ENCODE measurements at regions of chr15 and their contacts with region 1.

Region 1: GRCh38 chr15:78241007-78241406 is 6.6 kb upstream of the ACSBG1 start:
- DNase-seq: no peak
- ATAC-seq: peak; percentile 99
- H3K4me3 ChIP-seq: no peak overlapping the region
- H3K27ac ChIP-seq: no peak overlapping the region
- H3K4me1 ChIP-seq: no peaks in the 10 kb centered on the region
- H3K27me3 ChIP-seq: no peaks in the 10 kb centered on the region
- CTCF ChIP-seq: peak; percentile 84 to 93 (median 88)
- EP300 ChIP-seq: no peak
- POLR2A ChIP-seq: no peak
- RAD21 ChIP-seq: peak; percentile 86

Region 2: DNA sequence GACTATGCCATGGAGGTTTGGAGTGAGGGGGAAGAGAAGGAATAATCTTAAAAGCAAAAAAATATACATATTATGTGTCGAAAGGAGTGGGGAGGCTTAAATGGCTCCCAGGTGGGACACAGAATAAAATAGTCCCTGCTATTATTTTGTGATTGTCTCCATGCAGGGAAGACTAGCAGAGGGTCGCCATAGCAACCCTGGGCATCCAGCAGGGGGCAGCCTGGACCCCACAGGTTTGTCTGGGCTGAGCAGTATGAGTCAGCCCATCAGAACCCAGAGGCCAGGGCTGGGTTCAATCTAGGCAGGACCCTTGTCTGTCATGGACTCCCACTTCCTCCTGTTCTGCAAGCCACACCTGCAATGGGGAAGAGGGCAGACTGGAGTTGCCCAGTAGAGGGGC is 590.7 kb before region 1 on chr15:
- CTCF ChIA-PET with region 1: no interaction called
- POLR2A ChIA-PET with region 1: no interaction called
- RAD21 ChIA-PET with region 1: no interaction called
- SMC1A ChIA-PET with region 1: no interaction called
- in situ Hi-C with region 1: no loop called
- intact Hi-C with region 1: no loop called
- DNase-seq: no peak
- ATAC-seq: peak; percentile 53
- H3K4me3 ChIP-seq: no peak overlapping the region
- H3K27ac ChIP-seq: no peak overlapping the region
- H3K4me1 ChIP-seq: no peaks in the 10 kb centered on the region
- H3K27me3 ChIP-seq: peaks cover 0 to 2% of the 10 kb centered on the region in 2 experiments; a peak in 2 of 4 replicates
- CTCF ChIP-seq: peak in 2 of 3 experiments; percentile 19 to 27; a peak in 2 of 6 replicates
- EP300 ChIP-seq: no peak
- POLR2A ChIP-seq: no peak
- RAD21 ChIP-seq: 0 out of 2 replicates have a peak, but pooled peaks have one; percentile 3

Region 3: DNA sequence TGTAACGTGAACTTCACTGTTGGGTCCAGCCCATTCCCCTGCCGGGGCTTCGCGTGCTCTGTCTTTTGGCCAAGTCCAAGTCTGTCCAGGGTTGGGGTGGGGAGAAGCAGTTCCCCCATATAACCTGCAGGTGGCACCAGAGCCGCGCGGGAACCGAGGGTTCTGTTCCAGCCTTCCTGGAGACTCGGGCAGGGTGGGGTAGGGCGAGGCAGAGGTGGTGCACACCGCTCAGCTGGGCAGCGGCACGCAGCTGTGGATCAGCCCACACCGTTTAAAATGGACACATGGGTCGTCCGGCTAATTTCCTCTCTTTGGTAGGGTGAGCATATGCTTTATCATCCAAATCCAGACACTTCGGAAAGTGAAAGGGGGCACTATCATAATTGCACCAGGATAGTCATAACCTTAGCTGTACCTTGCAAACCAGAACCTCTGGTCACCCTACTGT is 281.6 kb before region 1 on chr15:
- CTCF ChIA-PET with region 1: interaction called, 37 read pairs
- POLR2A ChIA-PET with region 1: no interaction called
- RAD21 ChIA-PET with region 1: interaction called, 10 read pairs
- SMC1A ChIA-PET with region 1: interaction called, 9 read pairs
- in situ Hi-C with region 1: loop called (anchors 5 kb)
- intact Hi-C with region 1: loop called (anchors 1 kb)
- DNase-seq: peak; percentile 13
- ATAC-seq: peak; percentile 98
- H3K4me3 ChIP-seq: peak overlapping the region; percentile 39; the same call in 1 of the 2 replicates
- H3K27ac ChIP-seq: no peak overlapping the region
- H3K4me1 ChIP-seq: peaks cover 6% of the 10 kb centered on the region
- H3K27me3 ChIP-seq: no peaks in the 10 kb centered on the region
- CTCF ChIP-seq: peak; percentile 93 to 98 (median 95)
- EP300 ChIP-seq: no peak
- POLR2A ChIP-seq: no peak
- RAD21 ChIP-seq: peak; percentile 93

Region 4: DNA sequence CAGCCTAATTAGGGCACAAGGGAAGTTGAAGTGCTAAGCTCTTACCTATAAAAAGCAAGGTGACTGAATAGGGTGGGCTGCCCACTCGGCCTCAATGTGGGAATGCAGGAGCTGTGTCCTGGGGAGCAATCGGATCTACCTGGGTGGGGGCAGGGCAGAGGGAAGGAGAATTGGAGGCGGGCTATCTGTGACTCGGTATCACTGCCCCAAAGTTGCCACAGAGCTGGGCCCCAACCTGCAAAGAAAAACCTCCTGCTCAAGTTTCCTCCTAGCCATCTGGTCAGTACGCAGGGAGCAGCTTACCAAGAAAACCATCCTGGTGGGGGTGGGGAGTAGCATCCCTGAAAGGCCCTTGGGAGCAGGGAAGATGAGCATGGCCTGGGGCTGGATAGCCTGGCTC is 120.5 kb before region 1 on chr15:
- CTCF ChIA-PET with region 1: interaction called, 164 read pairs
- POLR2A ChIA-PET with region 1: interaction called, 3 read pairs
- RAD21 ChIA-PET with region 1: interaction called, 3 read pairs
- SMC1A ChIA-PET with region 1: interaction called, 51 read pairs
- in situ Hi-C with region 1: no loop called
- intact Hi-C with region 1: no loop called
- DNase-seq: no peak
- ATAC-seq: no peak
- H3K4me3 ChIP-seq: no peak overlapping the region
- H3K27ac ChIP-seq: no peak overlapping the region
- H3K4me1 ChIP-seq: no peaks in the 10 kb centered on the region
- H3K27me3 ChIP-seq: no peaks in the 10 kb centered on the region
- CTCF ChIP-seq: no peak
- EP300 ChIP-seq: no peak
- POLR2A ChIP-seq: no peak
- RAD21 ChIP-seq: no peak

Region 5: DNA sequence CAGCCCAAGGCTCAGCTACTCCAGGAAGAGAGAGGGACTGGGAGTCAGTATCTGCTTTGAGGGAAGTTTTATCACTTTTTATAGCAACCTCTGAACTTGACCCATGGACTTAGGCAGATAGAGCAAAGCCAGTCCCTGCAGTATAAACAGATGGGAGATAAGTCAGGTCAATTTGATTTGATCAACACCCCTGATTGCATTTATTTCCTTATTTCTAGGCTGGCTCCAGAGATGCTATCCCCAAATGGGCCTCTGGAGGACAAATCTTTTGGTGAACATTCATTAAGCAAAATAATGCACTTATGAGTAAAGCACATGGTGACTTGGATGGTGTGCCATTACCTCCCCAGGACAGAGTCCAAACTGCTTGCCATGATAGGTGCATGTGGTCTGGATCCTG is 100.7 kb before region 1 on chr15:
- CTCF ChIA-PET with region 1: interaction called, 10 read pairs
- POLR2A ChIA-PET with region 1: no interaction called
- RAD21 ChIA-PET with region 1: interaction called, 4 read pairs
- SMC1A ChIA-PET with region 1: interaction called, 8 read pairs
- in situ Hi-C with region 1: no loop called
- intact Hi-C with region 1: no loop called
- DNase-seq: no peak
- ATAC-seq: no peak
- H3K4me3 ChIP-seq: no peak overlapping the region
- H3K27ac ChIP-seq: no peak overlapping the region
- H3K4me1 ChIP-seq: no peaks in the 10 kb centered on the region
- H3K27me3 ChIP-seq: no peaks in the 10 kb centered on the region
- CTCF ChIP-seq: no peak
- EP300 ChIP-seq: no peak
- POLR2A ChIP-seq: no peak
- RAD21 ChIP-seq: no peak

Region 6: GRCh38 chr15:78204351-78205309 is 36.4 kb before region 1 on chr15:
- CTCF ChIA-PET with region 1: interaction called, 15 read pairs
- POLR2A ChIA-PET with region 1: interaction called, 5 read pairs
- RAD21 ChIA-PET with region 1: interaction called, 3 read pairs
- SMC1A ChIA-PET with region 1: interaction called, 3 read pairs
- in situ Hi-C with region 1: no loop called
- intact Hi-C with region 1: no loop called
- DNase-seq: no peak
- ATAC-seq: no peak
- H3K4me3 ChIP-seq: no peak overlapping the region
- H3K27ac ChIP-seq: no peak overlapping the region
- H3K4me1 ChIP-seq: no peaks in the 10 kb centered on the region
- H3K27me3 ChIP-seq: no peaks in the 10 kb centered on the region; a peak in 1 of 4 replicates
- CTCF ChIP-seq: no peak
- EP300 ChIP-seq: no peak
- POLR2A ChIP-seq: no peak
- RAD21 ChIP-seq: no peak

Region 7: DNA sequence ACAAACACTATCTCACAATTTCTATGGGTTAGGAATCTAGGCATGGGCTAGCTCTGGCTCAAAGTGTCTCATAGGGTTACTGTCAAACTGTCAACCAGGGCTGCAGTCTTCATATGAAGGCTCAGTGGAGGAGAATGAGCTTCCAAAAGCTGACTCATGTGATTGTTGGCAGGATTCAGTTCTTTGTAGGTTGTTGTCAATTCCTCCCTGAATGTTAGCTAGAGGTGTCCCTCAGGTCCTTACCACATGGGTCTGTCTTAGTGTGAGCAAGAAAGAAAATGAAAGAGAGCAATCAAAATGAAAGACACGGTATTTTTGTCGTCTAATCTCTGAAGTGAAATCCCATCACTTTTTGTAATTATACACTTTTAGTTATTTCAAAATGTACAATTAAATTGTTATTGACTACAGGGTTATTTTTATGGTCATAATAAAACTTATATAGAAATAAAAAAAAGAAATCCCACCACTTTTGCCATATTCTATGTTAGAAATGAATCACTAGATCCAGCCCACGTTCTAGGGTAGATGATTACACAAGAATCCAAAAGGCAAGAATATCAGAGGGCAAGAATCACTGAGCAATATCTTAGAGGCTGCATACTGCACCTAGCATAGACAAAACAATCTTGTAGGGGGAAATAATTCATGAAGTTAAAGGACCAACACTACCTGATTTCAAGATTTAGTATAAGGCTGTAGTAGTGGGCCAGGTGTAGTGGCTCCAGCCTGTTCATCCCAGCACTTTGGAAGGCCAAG is 15.0 kb before region 1 on chr15:
- CTCF ChIA-PET with region 1: interaction called, 17 read pairs
- POLR2A ChIA-PET with region 1: interaction called, 3 read pairs
- RAD21 ChIA-PET with region 1: interaction called, 6 read pairs
- SMC1A ChIA-PET with region 1: interaction called, 5 read pairs
- in situ Hi-C with region 1: no loop called
- intact Hi-C with region 1: no loop called
- DNase-seq: peak; percentile 49
- ATAC-seq: peak; percentile 94
- H3K4me3 ChIP-seq: no peak overlapping the region
- H3K27ac ChIP-seq: peak overlapping the region; percentile 58
- H3K4me1 ChIP-seq: peaks cover 3% of the 10 kb centered on the region; the same call in 1 of the 2 replicates
- H3K27me3 ChIP-seq: no peaks in the 10 kb centered on the region
- CTCF ChIP-seq: no peak
- EP300 ChIP-seq: no peak
- POLR2A ChIP-seq: no peak
- RAD21 ChIP-seq: no peak

Region 8: GRCh38 chr15:78341057-78341987 is 100.3 kb after region 1 on chr15:
- CTCF ChIA-PET with region 1: no interaction called
- POLR2A ChIA-PET with region 1: no interaction called
- RAD21 ChIA-PET with region 1: no interaction called
- SMC1A ChIA-PET with region 1: no interaction called
- in situ Hi-C with region 1: no loop called
- intact Hi-C with region 1: no loop called
- DNase-seq: no peak
- ATAC-seq: no peak
- H3K4me3 ChIP-seq: no peak overlapping the region
- H3K27ac ChIP-seq: no peak overlapping the region
- H3K4me1 ChIP-seq: no peaks in the 10 kb centered on the region
- H3K27me3 ChIP-seq: peaks cover 11 to 14% of the 10 kb centered on the region in 2 experiments
- CTCF ChIP-seq: no peak
- EP300 ChIP-seq: no peak
- POLR2A ChIP-seq: no peak
- RAD21 ChIP-seq: no peak

Region 9: DNA sequence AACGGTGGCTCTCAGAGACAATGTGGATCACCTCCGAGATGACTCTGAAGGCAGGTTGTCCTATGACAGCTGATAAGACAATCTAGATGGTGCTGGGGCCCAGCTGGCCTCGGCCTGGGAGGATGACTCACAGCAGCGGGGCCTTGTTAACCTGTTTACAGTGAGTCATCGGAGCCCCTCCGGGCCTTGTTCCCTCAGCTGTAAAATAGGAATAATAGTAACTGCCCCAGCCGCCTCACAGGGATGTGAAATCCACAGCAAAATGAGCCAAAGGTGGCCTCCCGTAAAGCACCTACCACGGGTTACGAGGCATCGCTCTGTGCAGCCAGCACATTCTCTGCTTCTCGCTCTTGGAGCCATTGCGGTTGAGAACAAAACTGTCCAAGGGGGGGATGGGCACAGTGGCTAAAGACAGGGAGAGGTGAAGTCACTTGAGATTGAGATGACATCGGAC is 938.1 kb after region 1 on chr15:
- CTCF ChIA-PET with region 1: no interaction called
- POLR2A ChIA-PET with region 1: no interaction called
- RAD21 ChIA-PET with region 1: no interaction called
- SMC1A ChIA-PET with region 1: no interaction called
- in situ Hi-C with region 1: no loop called
- intact Hi-C with region 1: no loop called
- DNase-seq: no peak
- ATAC-seq: no peak
- H3K4me3 ChIP-seq: no peak overlapping the region
- H3K27ac ChIP-seq: no peak overlapping the region
- H3K4me1 ChIP-seq: no peaks in the 10 kb centered on the region
- H3K27me3 ChIP-seq: peaks cover 0 to 4% of the 10 kb centered on the region in 2 experiments; a peak in 2 of 4 replicates
- CTCF ChIP-seq: no peak
- EP300 ChIP-seq: no peak
- POLR2A ChIP-seq: no peak
- RAD21 ChIP-seq: no peak

Measured in GM12878 (cell line).